ENCODE measurements at regions of chr15 and their contacts with region 1.

Region 1: GRCh38 chr15:74382004-74382816 is 14.8 kb upstream of the CYP11A1 start:
- DNase-seq: peak; percentile 62 to 91
- H3K4me3 ChIP-seq: no peak overlapping the region
- H3K27ac ChIP-seq: no peak overlapping the region
- H3K4me1 ChIP-seq: peaks cover 63% of the 10 kb centered on the region
- H3K27me3 ChIP-seq: no peaks in the 10 kb centered on the region
- CTCF ChIP-seq: peak; percentile 91

Region 2: DNA sequence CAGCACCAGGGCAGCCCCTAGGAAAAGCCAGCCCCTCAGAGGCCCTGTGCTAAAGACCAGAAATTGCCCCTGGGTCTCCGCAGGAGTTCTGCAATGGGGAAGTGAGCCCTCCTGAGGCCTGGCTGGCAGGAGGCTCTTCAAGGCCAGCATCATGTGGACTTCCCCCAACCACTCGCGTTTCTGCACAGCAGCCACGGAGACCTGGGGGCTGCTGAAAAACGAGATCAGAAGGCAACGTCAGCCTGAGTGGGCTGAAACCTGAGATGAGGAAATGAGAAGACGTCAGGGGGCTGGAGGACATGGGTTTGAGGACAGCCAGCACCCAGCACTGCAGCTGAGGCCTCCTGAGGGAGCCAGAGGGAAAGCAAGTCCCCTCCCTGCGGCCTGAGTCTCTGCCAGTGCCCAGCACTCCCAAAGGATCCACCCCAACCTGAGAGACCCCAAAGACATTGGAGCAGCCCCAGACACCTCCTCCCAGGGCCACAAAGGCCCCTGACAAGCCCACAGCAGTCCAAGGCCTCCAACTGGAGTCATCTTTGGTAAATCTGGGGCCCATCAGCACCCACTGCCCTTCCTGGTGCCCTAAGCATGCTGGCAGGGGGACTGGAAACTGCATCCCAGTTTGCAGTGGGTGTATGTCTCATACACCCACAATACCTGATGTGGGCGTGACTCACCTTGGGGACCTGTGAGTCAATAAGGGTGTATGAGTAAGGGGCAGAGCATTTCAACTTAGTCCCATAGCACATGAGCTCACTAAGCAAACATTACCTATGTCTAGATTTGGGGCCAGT is 14.4 kb after region 1 on chr15:
- CTCF ChIA-PET with region 1: interaction called, 5 read pairs
- POLR2A ChIA-PET with region 1: interaction called, 13 read pairs
- intact Hi-C with region 1: loop called (anchors 2 kb)
- DNase-seq: peak; percentile 84 to 95
- H3K4me3 ChIP-seq: no peak overlapping the region
- H3K27ac ChIP-seq: peak overlapping the region; percentile 98
- H3K4me1 ChIP-seq: peaks cover 72% of the 10 kb centered on the region
- H3K27me3 ChIP-seq: no peaks in the 10 kb centered on the region
- CTCF ChIP-seq: no peak

Region 3: DNA sequence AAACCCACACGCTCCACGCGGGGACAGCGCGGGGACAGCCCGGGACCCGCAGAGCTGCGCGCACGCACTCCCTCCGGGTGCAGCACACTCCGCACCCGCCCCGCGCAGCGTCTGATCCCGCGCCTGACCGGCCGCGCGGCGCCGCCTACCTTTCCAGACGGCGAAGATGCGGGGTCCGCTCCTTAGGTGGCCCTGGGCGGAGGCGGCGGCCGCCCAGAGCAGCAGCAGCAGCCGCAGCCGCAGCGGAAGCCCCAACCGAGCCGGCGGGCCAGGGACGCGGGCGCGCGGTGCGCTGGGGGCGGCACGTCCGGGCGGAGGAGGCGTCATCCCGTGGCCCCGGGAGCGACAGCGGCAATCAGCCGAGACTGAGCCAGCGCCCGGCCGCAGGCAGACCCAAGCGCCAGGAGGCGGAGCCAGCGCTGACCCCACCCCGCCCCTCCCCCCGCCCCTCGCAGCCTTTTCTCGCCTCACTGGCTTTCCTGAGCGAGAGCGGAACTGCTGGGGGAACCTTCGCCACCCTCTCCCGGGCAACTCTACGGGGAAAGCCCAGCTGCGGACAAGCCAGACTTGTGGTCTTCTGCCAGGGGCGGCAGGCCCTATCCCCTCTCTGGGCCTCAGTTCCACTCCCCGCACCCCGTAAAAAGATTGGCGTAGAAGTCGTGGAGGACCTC is 51.5 kb after region 1 on chr15 and contains the start of gene SEMA7A:
- CTCF ChIA-PET with region 1: interaction called, 5 read pairs
- POLR2A ChIA-PET with region 1: interaction called, 19 read pairs
- intact Hi-C with region 1: loop called (anchors 1 kb)
- DNase-seq: peak; percentile 39 to 80
- H3K4me3 ChIP-seq: peak within 1 kb of the TSS; percentile 69
- H3K27ac ChIP-seq: no peak within 1 kb of the TSS
- H3K4me1 ChIP-seq: peaks cover 6% of the 10 kb centered on the region; the same call in 1 of the 2 replicates
- H3K27me3 ChIP-seq: no peaks in the 10 kb centered on the region
- CTCF ChIP-seq: no peak
- total RNA-seq, gene SEMA7A: 8.3 and 14.5 TPM in 2 replicates

Region 4: GRCh38 chr15:74545880-74546656 is 163.9 kb after region 1 on chr15:
- CTCF ChIA-PET with region 1: no interaction called
- POLR2A ChIA-PET with region 1: interaction called, 6 read pairs
- intact Hi-C with region 1: loop called (anchors 2 kb)
- DNase-seq: peak; percentile 92 to 97
- H3K4me3 ChIP-seq: no peak overlapping the region
- H3K27ac ChIP-seq: no peak overlapping the region
- H3K4me1 ChIP-seq: peaks cover 12% of the 10 kb centered on the region
- H3K27me3 ChIP-seq: no peaks in the 10 kb centered on the region
- CTCF ChIP-seq: no peak

Measured in PC-9 (cell line).